IMR-90 (cell line): ENCODE measurements at regions of chr2 and their contacts with region 1.

Region 1: DNA sequence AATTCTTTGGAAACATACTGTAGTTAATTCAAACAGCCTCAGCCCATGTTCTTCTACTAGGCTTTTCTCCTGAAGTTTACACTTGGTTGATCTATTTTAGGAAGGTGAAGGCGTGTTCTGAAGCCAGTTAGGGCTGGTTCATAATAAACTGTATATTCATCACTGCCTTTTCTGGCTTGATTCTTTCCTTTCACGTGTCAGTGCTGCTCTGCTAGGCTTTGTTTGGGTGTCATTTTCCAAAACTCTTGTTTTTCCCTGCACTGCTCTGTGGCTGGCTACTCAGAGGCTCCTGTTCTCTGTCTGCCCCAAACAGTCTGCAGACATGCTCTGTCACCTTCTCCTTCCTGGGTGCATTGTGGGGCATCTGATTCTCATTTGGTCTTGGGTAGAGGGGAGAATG is 136.1 kb downstream of the PARD3B start:
- DNase-seq: peak; percentile 49
- ATAC-seq: peak; percentile 91
- H3K4me3 ChIP-seq: no peak overlapping the region
- H3K27ac ChIP-seq: no peak overlapping the region
- H3K4me1 ChIP-seq: 0 out of 2 replicates have a peak, but pooled peaks cover 1% of the 10 kb centered on the region
- H3K27me3 ChIP-seq: no peaks in the 10 kb centered on the region
- CTCF ChIP-seq: no peak
- POLR2A ChIP-seq: no peak
- RAD21 ChIP-seq: no peak

Region 2: GRCh38 chr2:204583773-204584172 is 97.6 kb before region 1 on chr2:
- CTCF ChIA-PET with region 1: no interaction called
- POLR2A ChIA-PET with region 1: no interaction called
- dilution Hi-C with region 1: no loop called
- in situ Hi-C with region 1: no loop called
- intact Hi-C with region 1: no loop called
- DNase-seq: no peak
- ATAC-seq: no peak
- H3K4me3 ChIP-seq: no peak overlapping the region
- H3K27ac ChIP-seq: no peak overlapping the region
- H3K4me1 ChIP-seq: no peaks in the 10 kb centered on the region; the same call in 1 of the 2 replicates
- H3K27me3 ChIP-seq: no peaks in the 10 kb centered on the region
- CTCF ChIP-seq: no peak
- POLR2A ChIP-seq: no peak
- RAD21 ChIP-seq: no peak

Region 3: GRCh38 chr2:204611017-204611631 is 70.3 kb before region 1 on chr2:
- CTCF ChIA-PET with region 1: no interaction called
- POLR2A ChIA-PET with region 1: no interaction called
- dilution Hi-C with region 1: no loop called
- in situ Hi-C with region 1: no loop called
- intact Hi-C with region 1: loop called (anchors 5 kb)
- DNase-seq: no peak
- ATAC-seq: no peak
- H3K4me3 ChIP-seq: no peak overlapping the region
- H3K27ac ChIP-seq: no peak overlapping the region
- H3K4me1 ChIP-seq: peaks cover 5% of the 10 kb centered on the region
- H3K27me3 ChIP-seq: no peaks in the 10 kb centered on the region
- CTCF ChIP-seq: no peak
- POLR2A ChIP-seq: no peak
- RAD21 ChIP-seq: no peak

Region 4: GRCh38 chr2:204625167-204625566 is 56.2 kb before region 1 on chr2:
- CTCF ChIA-PET with region 1: no interaction called
- POLR2A ChIA-PET with region 1: no interaction called
- dilution Hi-C with region 1: no loop called
- in situ Hi-C with region 1: no loop called
- intact Hi-C with region 1: loop called (anchors 5 kb)
- DNase-seq: no peak
- ATAC-seq: no peak
- H3K4me3 ChIP-seq: no peak overlapping the region
- H3K27ac ChIP-seq: no peak overlapping the region
- H3K4me1 ChIP-seq: no peaks in the 10 kb centered on the region
- H3K27me3 ChIP-seq: no peaks in the 10 kb centered on the region
- CTCF ChIP-seq: 0 out of 2 replicates have a peak, but pooled peaks have one; percentile 19
- POLR2A ChIP-seq: no peak
- RAD21 ChIP-seq: peak; percentile 31; the same call in 1 of the 2 replicates

Region 5: DNA sequence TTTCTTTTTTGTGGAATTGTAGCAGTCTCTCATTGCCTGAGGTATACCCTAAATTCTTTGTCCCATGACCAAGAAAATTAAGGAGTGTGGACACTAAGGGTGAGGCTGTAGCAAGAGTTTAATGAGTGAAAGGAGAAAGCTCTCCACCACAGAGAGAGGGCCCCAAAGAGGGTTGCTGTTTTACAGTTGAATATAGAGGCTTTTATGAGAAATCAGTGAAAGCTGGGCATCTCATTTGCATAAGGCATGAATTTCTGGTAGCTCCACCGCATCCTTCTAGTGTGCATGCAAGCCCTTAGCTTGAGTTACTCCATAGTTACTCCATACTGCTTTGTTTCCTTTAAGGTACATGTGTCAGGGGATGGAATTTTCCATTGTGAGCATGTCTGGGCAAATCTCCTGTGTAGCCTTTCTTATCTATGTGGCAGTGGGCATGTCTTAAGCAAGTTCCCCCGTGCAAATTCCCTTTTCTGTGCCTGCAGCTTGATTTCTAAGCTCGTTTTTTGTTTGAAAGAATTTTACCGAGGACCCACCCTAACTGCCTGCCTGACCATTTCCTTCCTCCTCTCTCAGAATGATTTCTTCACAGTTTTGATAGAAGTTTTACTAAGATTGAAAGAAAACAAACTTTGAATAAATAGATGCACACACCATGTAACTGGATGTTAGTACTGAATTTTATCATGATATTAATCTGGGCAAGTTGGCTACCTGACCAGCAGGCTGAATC is 82.7 kb after region 1 on chr2:
- CTCF ChIA-PET with region 1: no interaction called
- POLR2A ChIA-PET with region 1: interaction called, 12 read pairs
- dilution Hi-C with region 1: no loop called
- in situ Hi-C with region 1: no loop called
- intact Hi-C with region 1: no loop called
- DNase-seq: no peak
- ATAC-seq: no peak
- H3K4me3 ChIP-seq: no peak overlapping the region
- H3K27ac ChIP-seq: no peak overlapping the region
- H3K4me1 ChIP-seq: no peaks in the 10 kb centered on the region
- H3K27me3 ChIP-seq: no peaks in the 10 kb centered on the region
- CTCF ChIP-seq: no peak
- POLR2A ChIP-seq: no peak
- RAD21 ChIP-seq: no peak